A549 (cell line): ENCODE measurements at regions of chr16 and their contacts with region 1.

Region 1: DNA sequence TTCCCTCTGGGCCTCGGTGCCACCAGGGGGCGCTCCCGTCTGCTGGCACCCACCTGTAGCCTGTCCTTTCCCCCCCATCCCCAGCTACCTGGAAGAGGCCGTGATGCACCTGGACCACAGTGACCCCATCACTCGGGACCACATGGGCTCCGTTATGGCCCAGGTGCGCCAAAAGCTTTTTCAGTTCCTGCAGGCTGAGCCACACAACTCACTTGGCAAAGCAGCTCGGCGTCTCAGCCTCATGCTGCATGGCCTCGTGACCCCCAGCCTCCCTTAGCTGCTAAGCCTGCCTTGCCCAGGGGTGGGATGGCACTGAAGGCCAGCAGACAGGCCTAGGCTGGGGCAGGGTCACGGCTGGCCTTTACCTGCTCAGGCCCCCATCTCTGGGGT is 818 bp upstream of the NRN1L start:
- DNase-seq: peak; percentile 59 to 92
- ATAC-seq: peak; percentile 16 to 92; a peak in 5 of 6 replicates
- H3K4me3 ChIP-seq: no peak overlapping the region
- H3K27ac ChIP-seq: no peak overlapping the region
- H3K4me1 ChIP-seq: peaks cover 9% of the 10 kb centered on the region; the same call in 1 of the 3 replicates
- CTCF ChIP-seq: peak; percentile 79
- EP300 ChIP-seq: no peak
- POLR2A ChIP-seq: no peak
- RAD21 ChIP-seq: peak; percentile 67 to 73

Region 2: GRCh38 chr16:67833418-67834241 is 50.2 kb before region 1 on chr16:
- CTCF ChIA-PET with region 1: interaction called, 19 read pairs
- POLR2A ChIA-PET with region 1: no interaction called
- DNase-seq: peak; percentile 86 to 97
- ATAC-seq: peak; percentile 99
- H3K4me3 ChIP-seq: peak overlapping the region; percentile 79
- H3K27ac ChIP-seq: peak overlapping the region; percentile 79 to 91
- H3K4me1 ChIP-seq: peaks cover 6% of the 10 kb centered on the region; the same call in 1 of the 3 replicates
- CTCF ChIP-seq: no peak
- EP300 ChIP-seq: no peak
- POLR2A ChIP-seq: peak; percentile 76
- RAD21 ChIP-seq: no peak

Region 3: GRCh38 chr16:67855491-67856188 is 28.2 kb before region 1 on chr16:
- CTCF ChIA-PET with region 1: interaction called, 86 read pairs
- POLR2A ChIA-PET with region 1: no interaction called
- DNase-seq: no peak
- ATAC-seq: no peak
- H3K4me3 ChIP-seq: no peak overlapping the region
- H3K27ac ChIP-seq: no peak overlapping the region
- H3K4me1 ChIP-seq: peaks cover 38% of the 10 kb centered on the region
- CTCF ChIP-seq: no peak
- EP300 ChIP-seq: no peak
- POLR2A ChIP-seq: no peak
- RAD21 ChIP-seq: no peak

Region 4: GRCh38 chr16:67872786-67873537 is 10.9 kb before region 1 on chr16 and contains the start of gene EDC4:
- CTCF ChIA-PET with region 1: interaction called, 58 read pairs
- POLR2A ChIA-PET with region 1: no interaction called
- DNase-seq: peak; percentile 83 to 89
- ATAC-seq: peak; percentile 87 to 92
- H3K4me3 ChIP-seq: peak within 1 kb of the TSS; percentile 99
- H3K27ac ChIP-seq: peak within 1 kb of the TSS; percentile 95 to 97
- H3K4me1 ChIP-seq: peaks cover 24% of the 10 kb centered on the region; the same call in 2 of the 3 replicates
- CTCF ChIP-seq: no peak
- EP300 ChIP-seq: peak in 1 of 2 experiments; percentile 7; a peak in 1 of 5 replicates
- POLR2A ChIP-seq: peak; percentile 83
- RAD21 ChIP-seq: no peak
- polyA plus RNA-seq, gene EDC4: 21.0 and 35.3 TPM in 2 replicates